ENCODE measurements at regions of chr19 and their contacts with region 1.

Region 1: DNA sequence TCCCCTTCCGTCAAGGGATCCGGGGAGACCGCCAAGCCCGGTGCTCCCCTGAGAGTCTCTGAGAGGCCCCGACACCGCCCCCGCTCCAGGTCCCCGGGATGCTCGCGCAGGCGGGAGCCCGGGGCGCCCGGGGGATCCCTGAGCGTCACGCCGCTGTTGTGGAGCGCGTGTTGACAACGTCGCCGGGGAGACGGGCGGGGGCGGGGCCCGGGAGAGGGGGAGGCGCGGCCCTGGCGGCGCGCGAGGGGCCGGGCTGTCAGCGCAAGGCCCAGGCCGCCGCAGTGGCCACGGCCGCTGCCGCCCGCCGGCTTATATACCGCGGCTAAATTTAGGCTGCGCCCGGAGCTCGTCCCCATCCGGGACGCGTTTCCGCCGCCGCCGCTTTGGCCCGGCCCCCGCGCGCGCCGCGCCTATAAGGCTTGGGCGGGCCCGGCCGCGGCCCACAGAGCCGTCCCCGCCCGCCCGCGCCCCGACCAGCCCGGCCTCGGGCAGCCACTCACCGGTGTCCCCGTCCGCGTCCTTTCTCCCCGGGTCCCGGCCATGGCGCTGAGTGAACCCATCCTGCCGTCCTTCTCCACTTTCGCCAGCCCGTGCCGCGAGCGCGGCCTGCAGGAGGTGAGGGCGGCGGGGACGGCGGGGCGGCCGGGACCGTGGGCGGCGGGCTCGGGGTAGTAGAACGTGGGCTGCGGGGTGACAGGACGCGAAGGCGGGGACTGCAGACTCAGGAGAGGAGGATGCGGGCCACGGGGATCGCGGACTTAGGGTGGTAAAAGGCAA is at the start of gene KLF2:
- DNase-seq: peak; percentile 90 to 96 (median 96)
- H3K4me3 ChIP-seq: peak within 1 kb of the TSS; percentile 46 to 81 (median 69)
- H3K27ac ChIP-seq: peak within 1 kb of the TSS in 1 of 2 experiments; percentile 76
- H3K4me1 ChIP-seq: peaks cover 13 to 58% (median 55%) of the 10 kb centered on the region in 4 experiments
- H3K27me3 ChIP-seq: peaks cover 0 to 45% (median 13%) of the 10 kb centered on the region in 5 experiments

Region 2: DNA sequence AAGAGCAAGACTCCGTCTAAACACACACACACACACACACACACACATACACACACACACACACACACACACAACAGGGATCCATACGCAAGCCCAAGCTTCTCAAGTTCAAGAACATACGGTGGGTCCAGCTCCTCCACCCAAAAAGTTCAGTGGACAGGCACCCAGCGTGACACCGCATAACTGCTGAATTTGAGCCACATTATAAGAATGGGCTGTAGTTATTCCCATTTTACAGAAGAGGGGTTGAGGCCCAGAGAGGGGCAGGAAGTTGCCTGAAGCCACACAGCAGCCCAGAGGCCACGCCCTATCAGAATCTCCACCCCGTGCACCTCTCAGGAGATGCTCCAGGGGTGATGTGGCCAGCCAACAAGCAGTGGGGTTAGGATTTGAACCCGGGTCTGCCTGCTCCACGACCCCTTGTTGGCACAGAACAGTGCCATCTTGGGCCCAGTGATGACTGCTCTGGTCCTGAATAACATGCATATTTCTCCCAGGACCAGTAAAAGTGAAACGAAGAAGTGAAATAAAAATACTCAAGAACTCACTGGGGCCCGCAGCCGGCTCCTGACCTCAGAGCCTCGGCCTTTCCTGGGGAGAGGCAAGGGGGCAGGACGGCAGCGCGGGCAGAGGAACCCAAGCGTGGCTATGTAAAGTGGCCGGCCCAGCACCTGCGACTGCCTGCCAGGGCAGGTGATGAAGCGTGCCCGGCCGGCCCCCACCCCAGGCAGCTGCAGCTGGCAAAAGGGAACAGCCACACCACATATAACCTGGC is 65.0 kb before region 1 on chr19:
- CTCF ChIA-PET with region 1: interaction called, 5 read pairs
- POLR2A ChIA-PET with region 1: interaction called, 16 read pairs
- DNase-seq: peak in 1 of 3 donors; percentile 56
- H3K4me3 ChIP-seq: no peak overlapping the region
- H3K27ac ChIP-seq: no peak overlapping the region
- H3K4me1 ChIP-seq: peaks cover 2 to 56% (median 46%) of the 10 kb centered on the region in 4 experiments
- H3K27me3 ChIP-seq: no peaks in the 10 kb centered on the region

Measured in common myeloid progenitor, CD34-positive (primary cell).